Ovary (tissue), 10 donors: ENCODE measurements at regions of chr12 and their contacts with region 1.

Region 1: GRCh38 chr12:47963340-47964040 is at the start of gene TMEM106C:
- DNase-seq: peak; percentile 90 to 97 (median 93)
- H3K4me3 ChIP-seq: peak within 1 kb of the TSS; percentile 81
- H3K27ac ChIP-seq: peak within 1 kb of the TSS; percentile 73 to 86
- H3K4me1 ChIP-seq: peaks cover 4% of the 10 kb centered on the region
- H3K27me3 ChIP-seq: no peaks in the 10 kb centered on the region
- CTCF ChIP-seq: peak; percentile 94 to 96 (median 95)
- EP300 ChIP-seq: no peak
- POLR2A ChIP-seq: peak; percentile 28
- total RNA-seq, gene TMEM106C: 31.1 to 87.5 (median 55.0) TPM

Region 2: DNA sequence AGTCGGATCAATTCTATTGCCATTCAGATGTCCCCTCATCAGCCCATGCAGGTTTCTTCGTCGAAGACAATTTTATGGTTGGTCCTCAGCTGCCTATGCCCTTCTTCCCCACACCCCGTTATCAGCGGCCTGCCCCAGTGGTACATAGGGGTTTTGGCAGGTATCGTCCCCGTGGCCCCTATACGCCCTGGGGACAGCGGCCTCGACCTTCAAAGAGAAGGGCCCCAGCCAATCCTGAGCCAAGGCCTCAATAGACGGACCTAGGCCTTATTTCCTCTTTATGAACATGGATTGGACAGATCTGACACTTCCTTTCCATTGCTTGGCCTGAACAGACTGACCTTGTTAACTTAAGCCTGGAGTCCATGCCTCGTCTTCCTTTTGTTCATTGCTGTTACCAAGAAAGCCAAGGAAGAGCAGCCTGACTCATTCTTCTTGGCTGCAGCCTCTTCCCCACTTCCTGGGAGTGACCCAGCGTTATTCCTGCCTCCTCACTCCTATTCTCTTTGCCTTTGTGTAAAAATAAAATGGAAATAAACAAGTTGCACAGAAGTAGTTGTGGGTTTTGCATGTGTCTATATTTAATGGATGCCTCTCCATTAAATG is 727.3 kb before region 1 on chr12:
- intact Hi-C with region 1: no loop called
- DNase-seq: no peak
- H3K4me3 ChIP-seq: no peak overlapping the region
- H3K27ac ChIP-seq: no peak overlapping the region
- H3K4me1 ChIP-seq: peaks cover 6% of the 10 kb centered on the region
- H3K27me3 ChIP-seq: no peaks in the 10 kb centered on the region
- CTCF ChIP-seq: no peak
- EP300 ChIP-seq: no peak
- POLR2A ChIP-seq: no peak

Region 3: DNA sequence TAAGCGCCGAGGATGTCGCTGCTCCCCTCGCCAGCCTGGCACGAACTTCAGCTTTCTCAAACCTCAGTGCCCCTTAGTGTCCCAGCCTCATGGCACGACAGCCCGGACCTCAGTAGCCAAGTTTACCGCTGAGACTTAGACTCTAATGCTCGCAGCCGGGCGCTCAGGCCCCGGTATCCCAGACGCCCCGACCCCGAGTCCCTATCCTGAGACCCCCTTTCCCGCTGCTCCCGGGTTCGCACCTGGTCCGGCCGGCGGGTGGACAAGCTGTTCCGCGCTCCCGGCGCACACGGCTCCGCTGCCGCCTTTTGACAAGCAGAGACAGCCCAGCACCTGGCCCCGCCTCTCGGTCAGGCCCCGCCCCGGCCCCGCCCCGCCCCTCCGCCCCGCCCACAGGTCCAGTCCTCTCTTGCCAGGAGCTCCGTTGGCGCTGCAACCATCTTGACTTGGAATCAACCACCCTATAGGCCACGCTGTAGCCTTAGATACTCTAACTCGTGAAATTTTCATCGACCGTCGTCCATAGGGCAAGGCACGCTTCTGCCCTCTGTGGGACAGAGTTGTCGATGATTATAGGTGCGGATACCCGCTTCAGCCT is 58.7 kb before region 1 on chr12 and contains the start of gene VDR:
- intact Hi-C with region 1: loop called in 1 of 4 experiments (anchors 2 kb)
- DNase-seq: peak; percentile 69 to 80 (median 76)
- H3K4me3 ChIP-seq: peak within 1 kb of the TSS; percentile 52
- H3K27ac ChIP-seq: peak within 1 kb of the TSS in 1 of 2 donors; percentile 33
- H3K4me1 ChIP-seq: peaks cover 11% of the 10 kb centered on the region
- H3K27me3 ChIP-seq: no peaks in the 10 kb centered on the region
- CTCF ChIP-seq: no peak
- EP300 ChIP-seq: no peak
- POLR2A ChIP-seq: no peak
- total RNA-seq, gene VDR: 0.71 to 2.7 (median 1.1) TPM

Region 4: GRCh38 chr12:48001505-48002413 is 38.3 kb after region 1 on chr12:
- intact Hi-C with region 1: no loop called
- DNase-seq: peak in 2 of 5 donors; percentile 55 to 56
- H3K4me3 ChIP-seq: peak overlapping the region; percentile 39
- H3K27ac ChIP-seq: no peak overlapping the region
- H3K4me1 ChIP-seq: peaks cover 13% of the 10 kb centered on the region
- H3K27me3 ChIP-seq: peaks cover 3% of the 10 kb centered on the region
- CTCF ChIP-seq: no peak
- EP300 ChIP-seq: no peak
- POLR2A ChIP-seq: no peak

Region 5: DNA sequence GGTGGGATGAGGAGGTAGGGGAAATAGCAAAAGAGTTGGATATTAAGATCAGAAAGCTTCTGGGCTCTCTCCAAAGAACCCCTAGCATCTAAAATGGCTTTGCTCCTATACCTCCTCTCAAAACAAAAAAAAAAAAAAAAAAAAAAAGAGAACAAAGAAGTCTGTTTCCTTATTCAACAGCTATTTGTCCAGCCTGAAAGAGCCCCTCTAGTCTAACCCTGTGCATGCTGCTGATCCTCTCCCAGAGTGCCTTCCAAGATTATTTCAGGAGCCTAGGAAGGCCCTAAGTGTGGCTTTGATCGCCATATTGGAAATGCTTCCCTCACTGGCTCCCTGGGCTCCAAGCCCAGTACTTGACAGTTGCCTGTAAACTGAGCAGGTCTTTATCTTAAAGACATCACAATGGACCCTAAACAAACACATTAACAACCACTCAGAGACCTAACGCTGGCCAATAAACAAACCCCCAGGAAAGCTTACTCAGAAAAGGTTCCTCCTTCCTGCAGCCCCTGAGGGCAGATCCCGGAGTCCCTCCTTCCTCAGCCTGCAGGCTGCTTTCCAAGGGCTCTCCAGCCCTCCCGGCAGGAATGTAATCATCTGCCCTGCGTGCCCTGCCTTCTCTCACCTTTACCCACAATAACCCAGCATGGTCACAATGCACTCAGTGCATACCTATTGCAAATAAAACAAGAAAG is 58.1 kb after region 1 on chr12:
- intact Hi-C with region 1: no loop called
- DNase-seq: no peak
- H3K4me3 ChIP-seq: no peak overlapping the region
- H3K27ac ChIP-seq: no peak overlapping the region
- H3K4me1 ChIP-seq: peaks cover 1% of the 10 kb centered on the region
- H3K27me3 ChIP-seq: no peaks in the 10 kb centered on the region
- CTCF ChIP-seq: no peak
- EP300 ChIP-seq: no peak
- POLR2A ChIP-seq: no peak